ENCODE measurements at regions of chr5 and their contacts with region 1.

Region 1: DNA sequence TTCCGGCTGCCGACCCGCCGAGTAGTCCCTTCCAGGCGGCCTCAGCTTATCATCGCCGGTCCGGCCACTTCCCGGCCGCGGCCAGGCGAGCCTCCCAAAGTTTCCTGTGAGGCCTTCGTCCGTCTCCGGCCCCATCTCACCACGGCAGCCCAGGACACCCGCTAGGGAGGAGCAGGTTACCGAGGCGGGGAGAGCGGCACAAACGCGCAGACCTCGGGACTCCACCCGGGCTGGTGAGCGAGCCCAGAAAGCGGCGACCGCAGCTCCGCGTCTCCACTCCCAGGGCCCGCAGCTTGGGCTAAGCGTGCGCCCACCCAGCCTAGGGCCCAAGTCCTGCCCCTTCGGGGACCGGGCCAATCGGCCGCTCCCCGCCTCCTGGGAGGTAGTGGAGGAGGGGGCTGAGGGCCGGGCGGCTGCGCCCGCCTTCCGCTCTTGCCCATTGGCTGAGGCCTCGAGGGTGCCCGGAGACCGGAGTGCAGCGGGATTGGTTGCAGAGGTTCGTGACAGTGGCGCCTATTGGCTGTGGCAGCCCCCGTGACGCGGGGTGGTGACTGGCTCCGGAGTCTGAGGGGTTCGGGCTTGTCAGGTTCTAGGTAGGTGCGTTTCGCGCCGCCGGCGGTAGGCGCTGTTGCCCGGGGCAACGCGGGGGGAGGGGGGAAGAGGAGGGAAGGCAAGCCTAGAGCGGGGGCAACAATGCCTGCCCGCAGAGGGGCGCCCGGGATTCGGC is 867 bp downstream of the FER start:
- DNase-seq: peak; percentile 99
- ATAC-seq: peak; percentile 91
- H3K4me3 Mint-ChIP-seq: peak overlapping the region; percentile 87
- H3K27ac Mint-ChIP-seq: peak overlapping the region; percentile 94
- H3K4me1 Mint-ChIP-seq: peaks cover 29% of the 10 kb centered on the region
- H3K27me3 Mint-ChIP-seq: no peaks in the 10 kb centered on the region
- CTCF ChIP-seq: no peak

Region 2: DNA sequence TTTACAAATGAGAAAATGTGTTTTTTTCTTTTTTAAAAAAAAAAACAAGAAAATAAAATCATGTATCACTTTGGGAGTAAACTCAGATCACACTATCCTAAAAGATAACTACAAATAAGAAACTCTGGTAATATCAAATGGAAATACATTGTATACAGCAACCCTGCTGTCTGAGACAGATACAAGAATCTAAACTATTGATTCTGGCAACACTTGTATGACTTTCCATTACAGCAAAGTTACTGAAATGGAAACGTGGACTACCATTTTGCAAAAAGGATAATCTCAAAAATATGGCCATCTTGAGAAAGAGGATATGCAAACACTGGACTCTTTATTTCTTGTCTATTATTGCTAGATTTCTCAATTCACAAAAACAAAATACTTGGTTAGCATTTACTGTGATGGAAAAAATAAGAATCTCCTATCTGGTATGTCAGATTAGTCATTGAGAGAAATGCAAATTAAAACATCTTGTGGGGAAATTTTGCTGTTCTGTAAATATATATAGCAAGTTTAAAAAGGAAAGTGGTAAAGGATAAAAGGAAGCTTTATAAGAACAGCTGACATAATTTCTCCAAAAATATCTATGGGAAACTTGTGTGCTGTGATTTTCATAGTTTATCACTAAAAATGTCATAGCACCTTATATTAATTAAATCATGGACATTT is 113.8 kb before region 1 on chr5:
- CTCF ChIA-PET with region 1: no interaction called
- POLR2A ChIA-PET with region 1: no interaction called
- DNase-seq: no peak
- ATAC-seq: no peak
- H3K4me3 Mint-ChIP-seq: no peak overlapping the region
- H3K27ac Mint-ChIP-seq: no peak overlapping the region
- H3K4me1 Mint-ChIP-seq: peaks cover 38% of the 10 kb centered on the region
- H3K27me3 Mint-ChIP-seq: no peaks in the 10 kb centered on the region
- CTCF ChIP-seq: no peak

Region 3: GRCh38 chr5:108655750-108656450 is 92.7 kb before region 1 on chr5:
- CTCF ChIA-PET with region 1: no interaction called
- POLR2A ChIA-PET with region 1: no interaction called
- DNase-seq: no peak
- ATAC-seq: no peak
- H3K4me3 Mint-ChIP-seq: no peak overlapping the region
- H3K27ac Mint-ChIP-seq: no peak overlapping the region
- H3K4me1 Mint-ChIP-seq: 0 out of 2 replicates have a peak, but pooled peaks cover 5% of the 10 kb centered on the region
- H3K27me3 Mint-ChIP-seq: peaks cover 3% of the 10 kb centered on the region; the same call in 1 of the 2 replicates
- CTCF ChIP-seq: no peak

Region 4: DNA sequence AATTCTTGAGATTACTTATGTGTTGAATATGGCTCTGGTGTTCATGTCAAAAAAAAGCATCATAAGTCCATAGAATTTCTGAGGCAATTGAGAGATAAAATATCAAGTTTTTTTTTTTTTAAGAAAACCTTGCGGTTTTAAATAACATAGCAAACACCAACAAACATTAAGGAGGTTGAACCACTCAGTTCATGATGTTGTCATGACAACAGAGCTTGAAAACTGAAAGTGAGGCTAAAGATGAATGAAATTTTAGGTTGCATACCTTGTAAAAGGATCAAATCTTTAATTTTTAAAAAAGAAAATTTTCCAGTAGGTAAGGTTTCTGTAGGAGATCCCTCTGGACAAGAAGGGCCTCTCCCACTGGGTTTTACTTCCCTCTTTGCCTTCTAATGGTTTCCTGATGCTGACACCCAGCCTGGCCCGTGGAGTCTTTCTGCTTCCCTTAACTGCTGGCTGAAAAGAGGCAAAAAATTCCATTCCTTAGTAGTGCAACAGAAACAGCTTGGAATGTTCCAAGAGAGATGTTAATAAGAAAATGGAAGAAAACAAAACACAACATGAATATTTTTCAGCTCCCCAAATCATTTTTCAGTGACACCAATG is 60.9 kb before region 1 on chr5:
- CTCF ChIA-PET with region 1: interaction called, 3 read pairs
- POLR2A ChIA-PET with region 1: interaction called, 20 read pairs
- DNase-seq: no peak
- ATAC-seq: no peak
- H3K4me3 Mint-ChIP-seq: no peak overlapping the region
- H3K27ac Mint-ChIP-seq: peak overlapping the region; percentile 93
- H3K4me1 Mint-ChIP-seq: peaks cover 53% of the 10 kb centered on the region
- H3K27me3 Mint-ChIP-seq: no peaks in the 10 kb centered on the region
- CTCF ChIP-seq: no peak

Region 5: DNA sequence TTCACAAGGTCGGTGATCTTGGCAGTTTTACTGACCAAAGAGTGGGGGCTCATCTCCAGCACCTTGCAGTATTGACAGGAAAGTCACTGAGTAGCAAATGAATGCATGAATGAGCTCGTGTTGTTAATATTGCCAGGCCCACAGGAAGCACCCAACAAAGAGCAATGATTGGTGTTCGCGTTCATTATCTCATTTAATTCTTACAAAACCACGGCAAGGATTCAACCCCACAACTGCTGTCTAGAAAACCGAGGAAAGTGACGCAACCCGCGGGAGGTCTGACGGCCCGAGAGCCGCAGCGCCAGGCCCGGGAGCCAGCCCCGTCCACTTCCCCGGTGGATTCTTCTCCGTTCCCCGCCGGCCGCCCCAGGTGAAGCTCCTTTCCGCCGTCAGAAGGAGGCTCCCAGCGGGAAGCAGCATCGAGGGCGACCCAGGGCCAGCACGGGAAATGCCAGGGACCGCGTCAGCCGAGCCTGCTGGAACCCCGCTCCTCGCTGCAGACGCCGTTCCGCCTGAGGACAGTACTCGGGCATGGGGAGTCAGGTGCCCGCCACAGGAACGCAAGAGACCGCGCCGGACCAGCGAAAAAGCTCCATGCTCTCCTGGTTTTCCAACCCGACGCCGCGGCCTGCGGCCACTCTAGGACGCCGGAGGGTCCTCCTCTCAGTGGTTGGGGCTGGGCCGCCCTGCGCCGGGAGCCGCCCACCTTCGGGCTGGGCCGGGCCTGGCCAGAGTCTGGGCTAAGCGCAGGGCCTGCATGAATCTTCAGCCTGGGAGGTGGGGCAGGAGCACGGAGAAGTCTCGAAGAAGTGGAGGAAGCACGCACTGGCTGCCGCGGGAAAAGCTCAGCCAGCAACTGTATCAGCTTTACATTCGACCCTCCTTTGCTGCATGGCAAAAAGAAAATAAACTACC is 20.7 kb before region 1 on chr5:
- CTCF ChIA-PET with region 1: interaction called, 4 read pairs
- POLR2A ChIA-PET with region 1: interaction called, 54 read pairs
- DNase-seq: peak; percentile 92
- ATAC-seq: peak; percentile 100
- H3K4me3 Mint-ChIP-seq: peak overlapping the region; percentile 80
- H3K27ac Mint-ChIP-seq: peak overlapping the region; percentile 80
- H3K4me1 Mint-ChIP-seq: peaks cover 37% of the 10 kb centered on the region
- H3K27me3 Mint-ChIP-seq: no peaks in the 10 kb centered on the region
- CTCF ChIP-seq: no peak

Region 6: GRCh38 chr5:109409844-109410388 is 661.4 kb after region 1 on chr5 and contains the start of gene PJA2:
- CTCF ChIA-PET with region 1: no interaction called
- POLR2A ChIA-PET with region 1: interaction called, 11 read pairs
- DNase-seq: peak; percentile 99
- ATAC-seq: peak; percentile 92
- H3K4me3 Mint-ChIP-seq: peak within 1 kb of the TSS; percentile 97
- H3K27ac Mint-ChIP-seq: peak within 1 kb of the TSS; percentile 100
- H3K4me1 Mint-ChIP-seq: peaks cover 50% of the 10 kb centered on the region
- H3K27me3 Mint-ChIP-seq: no peaks in the 10 kb centered on the region
- CTCF ChIP-seq: no peak
- total RNA-seq, gene PJA2: 46.8 to 51.5 TPM (median 48.7 TPM) in 3 replicates